Mammary epithelial cell (primary cell): ENCODE measurements at regions of chr2 and their contacts with region 1.

Region 1: GRCh38 chr2:64523666-64524603 is at the start of gene AFTPH:
- DNase-seq: peak; percentile 99
- H3K4me3 ChIP-seq: peak within 1 kb of the TSS; percentile 79 to 93 (median 83)
- H3K27ac ChIP-seq: peak within 1 kb of the TSS; percentile 83
- H3K4me1 ChIP-seq: peaks cover 3% of the 10 kb centered on the region
- H3K27me3 ChIP-seq: no peaks in the 10 kb centered on the region
- CTCF ChIP-seq: no peak
- total RNA-seq, gene AFTPH: 20.7 to 34.5 TPM

Region 2: GRCh38 chr2:64453770-64454385 is 70.1 kb before region 1 on chr2 and contains the start of gene LGALSL:
- CTCF ChIA-PET with region 1: no interaction called
- dilution Hi-C with region 1: no loop called
- in situ Hi-C with region 1: no loop called
- intact Hi-C with region 1: loop called (anchors 2 kb)
- DNase-seq: peak; percentile 71
- H3K4me3 ChIP-seq: peak within 1 kb of the TSS; percentile 67 to 78 (median 68)
- H3K27ac ChIP-seq: peak within 1 kb of the TSS; percentile 91
- H3K4me1 ChIP-seq: peaks cover 23% of the 10 kb centered on the region
- H3K27me3 ChIP-seq: no peaks in the 10 kb centered on the region
- CTCF ChIP-seq: no peak
- total RNA-seq, gene LGALSL: 11.8 to 23.3 TPM

Region 3: DNA sequence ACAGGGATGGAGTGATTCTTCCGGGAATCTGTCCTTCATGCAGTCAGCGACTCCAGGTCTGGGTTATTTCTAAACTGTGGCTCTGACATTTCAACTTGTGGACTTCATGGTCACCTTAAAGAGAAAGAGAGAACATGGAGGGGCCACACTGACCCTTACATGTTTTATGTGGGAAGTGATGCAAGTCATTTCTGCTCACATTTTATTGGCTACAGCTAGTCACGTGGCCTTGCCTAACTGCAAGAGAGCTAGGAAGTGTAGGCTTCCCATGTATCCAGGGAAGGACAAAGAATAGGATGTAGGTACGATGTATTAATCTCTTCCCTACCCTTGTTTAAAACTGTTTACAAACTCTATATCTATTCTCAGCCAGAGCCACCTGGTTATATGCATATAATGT is 30.1 kb before region 1 on chr2:
- CTCF ChIA-PET with region 1: no interaction called
- dilution Hi-C with region 1: no loop called
- in situ Hi-C with region 1: no loop called
- intact Hi-C with region 1: no loop called
- DNase-seq: no peak
- H3K4me3 ChIP-seq: no peak overlapping the region
- H3K27ac ChIP-seq: no peak overlapping the region
- H3K4me1 ChIP-seq: no peaks in the 10 kb centered on the region
- H3K27me3 ChIP-seq: no peaks in the 10 kb centered on the region
- CTCF ChIP-seq: no peak

Region 4: GRCh38 chr2:64581018-64581417 is 57.1 kb after region 1 on chr2:
- CTCF ChIA-PET with region 1: no interaction called
- dilution Hi-C with region 1: no loop called
- in situ Hi-C with region 1: no loop called
- intact Hi-C with region 1: no loop called
- DNase-seq: no peak
- H3K4me3 ChIP-seq: no peak overlapping the region
- H3K27ac ChIP-seq: no peak overlapping the region
- H3K4me1 ChIP-seq: no peaks in the 10 kb centered on the region
- H3K27me3 ChIP-seq: no peaks in the 10 kb centered on the region
- CTCF ChIP-seq: no peak

Region 5: GRCh38 chr2:64644177-64645004 is 120.5 kb after region 1 on chr2:
- CTCF ChIA-PET with region 1: no interaction called
- dilution Hi-C with region 1: no loop called
- in situ Hi-C with region 1: no loop called
- intact Hi-C with region 1: loop called (anchors 1 kb)
- DNase-seq: peak; percentile 73
- H3K4me3 ChIP-seq: peak overlapping the region; percentile 44 to 52 (median 48)
- H3K27ac ChIP-seq: peak overlapping the region; percentile 97
- H3K4me1 ChIP-seq: peaks cover 70% of the 10 kb centered on the region
- H3K27me3 ChIP-seq: no peaks in the 10 kb centered on the region
- CTCF ChIP-seq: no peak

Region 6: DNA sequence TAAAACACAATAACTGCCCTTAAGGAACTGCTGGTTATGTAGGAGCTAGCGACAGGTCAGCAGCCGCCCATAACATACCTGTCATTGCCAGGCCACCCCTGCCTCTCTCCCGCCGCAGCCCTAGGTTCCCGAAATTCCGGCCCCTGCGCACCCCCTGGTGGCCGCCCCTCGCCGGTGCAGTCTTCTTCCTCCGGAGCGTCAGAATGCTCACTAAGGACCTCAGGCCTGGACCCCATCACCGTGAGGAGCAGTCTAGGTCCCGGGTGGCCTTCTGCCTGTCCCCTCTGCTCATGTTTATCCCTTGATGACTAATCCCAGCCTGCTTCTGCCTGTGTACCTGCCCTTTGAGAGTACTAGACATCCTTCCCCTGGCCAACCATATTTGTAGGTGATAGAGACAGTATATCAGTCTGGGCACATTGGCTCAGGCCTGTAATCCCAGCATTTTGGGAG is 349.6 kb after region 1 on chr2:
- CTCF ChIA-PET with region 1: no interaction called
- dilution Hi-C with region 1: no loop called
- in situ Hi-C with region 1: no loop called
- intact Hi-C with region 1: loop called (anchors 1 kb)
- DNase-seq: peak; percentile 36
- H3K4me3 ChIP-seq: peak overlapping the region in 1 of 3 experiments; percentile 11
- H3K27ac ChIP-seq: no peak overlapping the region
- H3K4me1 ChIP-seq: peaks cover 21% of the 10 kb centered on the region
- H3K27me3 ChIP-seq: no peaks in the 10 kb centered on the region
- CTCF ChIP-seq: peak; percentile 90 to 91

Region 7: GRCh38 chr2:65129826-65130663 is 606.1 kb after region 1 on chr2 and contains the start of gene RAB1A:
- CTCF ChIA-PET with region 1: no interaction called
- dilution Hi-C with region 1: no loop called
- in situ Hi-C with region 1: no loop called
- intact Hi-C with region 1: loop called (anchors 10 kb)
- DNase-seq: peak; percentile 99
- H3K4me3 ChIP-seq: peak within 1 kb of the TSS; percentile 92 to 98 (median 93)
- H3K27ac ChIP-seq: peak within 1 kb of the TSS; percentile 92
- H3K4me1 ChIP-seq: peaks cover 6% of the 10 kb centered on the region
- H3K27me3 ChIP-seq: no peaks in the 10 kb centered on the region
- CTCF ChIP-seq: no peak
- total RNA-seq, gene RAB1A: 76.7 to 158 TPM